Heart left ventricle (tissue), 16 donors: ENCODE measurements at regions of chr19 and their contacts with region 1.

Region 1: GRCh38 chr19:48965040-48965805 is at the start of gene FTL:
- DNase-seq: peak; percentile 98 to 99 (median 98)
- ATAC-seq: peak; percentile 85 to 92 (median 88)
- H3K4me3 ChIP-seq: peak within 1 kb of the TSS; percentile 61 to 99 (median 88)
- H3K27ac ChIP-seq: peak within 1 kb of the TSS; percentile 73 to 97 (median 93)
- H3K4me1 ChIP-seq: peaks cover 10 to 65% (median 47%) of the 10 kb centered on the region in 12 donors
- H3K27me3 ChIP-seq: no peaks in the 10 kb centered on the region
- CTCF ChIP-seq: no peak
- POLR2A ChIP-seq: peak; percentile 98 to 100
- total RNA-seq, gene FTL: 484 to 6,770 (median 857) TPM

Region 2: GRCh38 chr19:48872182-48872883 is 92.9 kb before region 1 on chr19 and contains the start of gene PPP1R15A:
- intact Hi-C with region 1: loop called in 8 of 10 experiments (anchors 2 to 10 kb)
- DNase-seq: peak; percentile 97 to 99 (median 97)
- ATAC-seq: peak; percentile 62 to 82 (median 72)
- H3K4me3 ChIP-seq: peak within 1 kb of the TSS; percentile 75 to 99 (median 89)
- H3K27ac ChIP-seq: peak within 1 kb of the TSS; percentile 98 to 100 (median 100)
- H3K4me1 ChIP-seq: peaks cover 11 to 60% (median 41%) of the 10 kb centered on the region in 12 donors
- H3K27me3 ChIP-seq: no peaks in the 10 kb centered on the region
- CTCF ChIP-seq: peak in 3 of 12 donors; percentile 7 to 19 (median 10)
- POLR2A ChIP-seq: peak; percentile 93 to 99
- total RNA-seq, gene PPP1R15A: 51.7 to 88.2 (median 62.6) TPM

Region 3: GRCh38 chr19:48907671-48908070 is 57.6 kb before region 1 on chr19:
- intact Hi-C with region 1: loop called in 3 of 10 experiments (anchors 5 to 10 kb)
- DNase-seq: no peak
- ATAC-seq: peak in 3 of 4 donors; percentile 28 to 56 (median 36)
- H3K4me3 ChIP-seq: no peak overlapping the region
- H3K27ac ChIP-seq: peak overlapping the region in 8 of 12 donors; percentile 23 to 65 (median 52)
- H3K4me1 ChIP-seq: peaks cover 0 to 20% (median 11%) of the 10 kb centered on the region in 12 donors
- H3K27me3 ChIP-seq: no peaks in the 10 kb centered on the region
- CTCF ChIP-seq: no peak
- POLR2A ChIP-seq: no peak

Region 4: DNA sequence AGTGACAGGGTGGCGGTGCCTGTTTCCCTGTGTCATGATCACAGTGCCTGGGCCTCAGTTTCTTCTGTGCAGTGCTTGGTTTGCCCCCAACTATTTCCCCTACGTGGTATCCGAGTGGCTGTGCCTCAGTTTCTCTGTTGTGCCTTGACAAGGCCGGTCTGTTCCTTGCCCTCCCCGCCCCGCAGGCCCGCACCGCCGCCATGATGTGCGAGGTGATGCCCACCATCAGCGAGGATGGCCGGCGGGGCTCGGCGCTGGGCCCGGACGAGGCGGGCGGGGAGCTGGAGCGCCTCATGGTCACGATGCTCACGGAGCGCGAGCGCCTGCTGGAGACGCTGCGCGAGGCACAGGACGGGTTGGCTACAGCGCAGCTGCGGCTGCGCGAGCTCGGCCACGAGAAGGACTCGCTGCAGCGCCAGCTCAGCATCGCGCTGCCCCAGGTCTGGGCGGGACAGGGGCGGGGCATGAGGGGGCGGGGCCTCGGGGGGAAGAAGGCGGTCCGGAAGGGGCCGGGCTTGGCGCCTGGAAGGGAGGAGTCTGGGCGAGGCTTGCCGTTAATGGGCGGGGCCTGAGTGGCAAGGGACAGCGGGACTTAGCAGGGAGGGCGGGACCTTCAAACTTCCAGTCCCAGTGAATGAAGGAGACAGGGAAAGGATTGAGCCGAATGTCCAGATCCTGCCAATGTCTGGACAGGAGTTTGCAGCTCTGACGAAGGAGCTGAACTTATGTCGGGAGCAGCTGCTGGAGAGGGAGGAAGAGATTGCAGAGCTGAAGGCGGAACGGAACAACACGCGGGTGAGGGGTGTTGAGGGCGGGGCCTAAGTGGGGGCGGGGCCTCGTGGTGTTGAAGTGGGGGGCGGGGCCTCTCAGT is 162.7 kb after region 1 on chr19:
- intact Hi-C with region 1: no loop called
- DNase-seq: peak; percentile 97
- ATAC-seq: peak; percentile 97 to 99 (median 98)
- H3K4me3 ChIP-seq: peak overlapping the region in 9 of 12 donors; percentile 24 to 44 (median 35)
- H3K27ac ChIP-seq: peak overlapping the region in 9 of 12 donors; percentile 14 to 82 (median 55)
- H3K4me1 ChIP-seq: peaks cover 0 to 15% (median 11%) of the 10 kb centered on the region in 12 donors
- H3K27me3 ChIP-seq: no peaks in the 10 kb centered on the region
- CTCF ChIP-seq: peak in 6 of 12 donors; percentile 6 to 42 (median 26)
- POLR2A ChIP-seq: peak in 1 of 2 donors; percentile 22